CD4-positive, alpha-beta memory T cell (primary cell): ENCODE measurements at regions of chr2 and their contacts with region 1.

Region 1: DNA sequence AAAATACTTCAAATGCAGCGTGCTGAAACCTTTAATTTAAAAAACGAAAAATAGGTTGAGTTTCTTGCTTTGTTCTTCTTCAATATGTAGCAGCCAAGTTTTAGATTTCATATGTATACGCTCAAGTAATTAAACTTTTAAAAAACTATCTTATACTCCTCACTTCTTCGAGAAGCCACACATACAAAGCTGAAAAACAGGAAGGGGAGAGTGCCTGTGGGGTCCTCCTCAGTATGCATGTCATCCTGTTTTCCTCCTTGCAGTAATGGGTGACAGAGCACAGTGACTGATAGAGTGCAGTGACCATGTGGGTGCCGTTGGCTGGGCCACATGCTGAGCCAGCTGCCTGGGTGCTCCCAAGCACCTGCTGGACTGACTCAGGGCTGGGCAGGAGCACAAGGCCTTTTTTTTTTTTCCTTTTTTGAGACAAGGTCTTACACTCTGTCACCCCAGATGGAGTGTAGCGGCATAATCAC is 33.3 kb downstream of the UXS1 start:
- DNase-seq: peak in 4 of 5 donors; percentile 56 to 70 (median 62)
- H3K4me3 ChIP-seq: peak overlapping the region in 1 of 2 donors; percentile 64
- H3K4me3 Mint-ChIP-seq: peak overlapping the region; percentile 87 to 98 (median 96)
- H3K27ac ChIP-seq: peak overlapping the region; percentile 80
- H3K27ac Mint-ChIP-seq: peak overlapping the region; percentile 91 to 99 (median 98)
- H3K4me1 ChIP-seq: peaks cover 87% of the 10 kb centered on the region
- H3K4me1 Mint-ChIP-seq: peaks cover 63 to 98% (median 79%) of the 10 kb centered on the region in 4 donors
- H3K27me3 ChIP-seq: no peaks in the 10 kb centered on the region
- H3K27me3 Mint-ChIP-seq: no peaks in the 10 kb centered on the region

Region 2: GRCh38 chr2:105929516-105929915 is 231.3 kb before region 1 on chr2:
- CTCF ChIA-PET with region 1: no interaction called
- POLR2A ChIA-PET with region 1: interaction called, 15 read pairs
- intact Hi-C with region 1: no loop called
- DNase-seq: peak; percentile 62 to 72 (median 68)
- H3K4me3 ChIP-seq: no peak overlapping the region
- H3K4me3 Mint-ChIP-seq: peak overlapping the region; percentile 33 to 81 (median 63)
- H3K27ac ChIP-seq: no peak overlapping the region
- H3K27ac Mint-ChIP-seq: peak overlapping the region; percentile 73 to 97 (median 90)
- H3K4me1 ChIP-seq: peaks cover 89% of the 10 kb centered on the region
- H3K4me1 Mint-ChIP-seq: peaks cover 50 to 66% (median 65%) of the 10 kb centered on the region in 4 donors
- H3K27me3 ChIP-seq: no peaks in the 10 kb centered on the region
- H3K27me3 Mint-ChIP-seq: no peaks in the 10 kb centered on the region

Region 3: GRCh38 chr2:106137731-106138521 is 22.9 kb before region 1 on chr2:
- CTCF ChIA-PET with region 1: interaction called, 56 read pairs
- POLR2A ChIA-PET with region 1: interaction called, 308 read pairs
- intact Hi-C with region 1: no loop called
- DNase-seq: peak; percentile 29 to 71 (median 53)
- H3K4me3 ChIP-seq: peak overlapping the region; percentile 34 to 51
- H3K4me3 Mint-ChIP-seq: peak overlapping the region; percentile 75 to 96 (median 86)
- H3K27ac ChIP-seq: peak overlapping the region; percentile 64
- H3K27ac Mint-ChIP-seq: peak overlapping the region; percentile 95 to 98 (median 95)
- H3K4me1 ChIP-seq: peaks cover 57% of the 10 kb centered on the region
- H3K4me1 Mint-ChIP-seq: peaks cover 39 to 50% (median 44%) of the 10 kb centered on the region in 4 donors
- H3K27me3 ChIP-seq: no peaks in the 10 kb centered on the region
- H3K27me3 Mint-ChIP-seq: no peaks in the 10 kb centered on the region

Region 4: GRCh38 chr2:106174056-106174455 is 13.2 kb after region 1 on chr2:
- CTCF ChIA-PET with region 1: interaction called, 12 read pairs
- POLR2A ChIA-PET with region 1: interaction called, 19 read pairs
- intact Hi-C with region 1: loop called (anchors 1 kb)
- DNase-seq: no peak
- H3K4me3 ChIP-seq: no peak overlapping the region
- H3K4me3 Mint-ChIP-seq: no peak overlapping the region
- H3K27ac ChIP-seq: no peak overlapping the region
- H3K27ac Mint-ChIP-seq: peak overlapping the region in 6 of 7 donors; percentile 30 to 66 (median 49)
- H3K4me1 ChIP-seq: peaks cover 20% of the 10 kb centered on the region
- H3K4me1 Mint-ChIP-seq: peaks cover 31 to 66% (median 47%) of the 10 kb centered on the region in 4 donors
- H3K27me3 ChIP-seq: no peaks in the 10 kb centered on the region
- H3K27me3 Mint-ChIP-seq: no peaks in the 10 kb centered on the region

Region 5: DNA sequence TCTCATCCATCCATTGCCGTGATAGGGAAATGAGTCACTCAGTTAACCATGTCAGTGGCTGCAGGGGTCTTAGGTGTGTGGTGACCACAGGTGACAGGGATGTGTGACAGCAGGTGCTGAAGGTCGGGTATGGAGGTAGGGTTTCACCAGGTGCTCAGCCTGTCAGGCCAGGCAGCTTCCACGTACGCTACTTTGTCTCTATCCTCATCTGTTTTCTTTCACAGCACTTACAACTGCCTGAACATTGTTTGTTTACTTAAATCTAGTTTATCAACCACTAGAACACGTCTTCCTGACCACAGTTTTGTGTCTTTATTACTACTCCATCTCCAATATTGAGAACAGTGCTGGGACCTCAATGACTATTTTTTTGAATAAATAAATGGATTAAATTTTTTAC is 44.7 kb after region 1 on chr2:
- CTCF ChIA-PET with region 1: no interaction called
- POLR2A ChIA-PET with region 1: interaction called, 10 read pairs
- intact Hi-C with region 1: no loop called
- DNase-seq: peak in 3 of 5 donors; percentile 12 to 29 (median 28)
- H3K4me3 ChIP-seq: no peak overlapping the region
- H3K4me3 Mint-ChIP-seq: peak overlapping the region in 6 of 8 donors; percentile 8 to 70 (median 40)
- H3K27ac ChIP-seq: no peak overlapping the region
- H3K27ac Mint-ChIP-seq: peak overlapping the region in 4 of 7 donors; percentile 34 to 91 (median 64)
- H3K4me1 ChIP-seq: peaks cover 10% of the 10 kb centered on the region
- H3K4me1 Mint-ChIP-seq: peaks cover 9 to 27% (median 12%) of the 10 kb centered on the region in 4 donors
- H3K27me3 ChIP-seq: no peaks in the 10 kb centered on the region
- H3K27me3 Mint-ChIP-seq: peaks cover 0 to 6% of the 10 kb centered on the region in 2 donors